PC-3 (cell line): ENCODE measurements at regions of chr13 and their contacts with region 1.

Region 1: DNA sequence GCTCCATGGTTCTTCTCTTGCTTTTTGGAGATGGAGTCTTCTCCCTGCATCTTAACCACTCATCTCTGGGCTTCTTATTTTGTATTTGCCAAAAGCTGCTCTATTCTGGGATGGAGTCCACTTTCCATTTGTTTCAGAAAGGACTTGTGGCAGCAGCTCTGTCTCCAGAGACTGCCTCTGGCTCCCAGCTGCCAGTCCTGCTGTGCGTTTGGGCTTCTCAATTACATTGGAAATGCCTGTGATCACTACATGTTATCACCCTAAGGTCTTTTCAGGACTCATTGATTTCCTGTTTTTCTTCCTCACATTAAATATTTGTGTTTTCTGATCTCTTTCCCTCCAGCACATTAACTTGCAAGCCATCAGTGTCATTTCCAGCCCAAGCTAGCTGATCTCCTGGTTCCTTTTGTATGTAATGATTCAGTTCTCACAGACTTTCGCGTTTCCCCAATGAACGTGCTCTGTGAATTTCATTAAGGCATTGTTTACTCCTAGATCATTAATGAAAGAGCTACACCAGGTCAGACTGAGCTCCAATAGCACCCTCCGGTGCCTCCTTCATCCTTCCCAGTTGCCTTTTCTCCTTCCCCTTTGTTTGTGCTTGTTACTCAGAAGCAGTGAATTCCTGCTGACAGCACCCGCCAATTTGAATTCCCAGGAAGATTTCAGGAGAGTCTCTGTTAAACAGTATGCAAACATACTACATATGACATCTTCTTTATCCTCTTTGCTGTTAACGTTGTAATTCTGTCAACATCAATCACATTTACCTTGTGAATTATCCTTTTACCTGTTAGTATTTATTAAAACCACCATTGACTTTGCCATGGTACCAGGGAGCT is 3.0 kb downstream of the CBY2 start:
- DNase-seq: no peak
- ATAC-seq: no peak
- H3K4me3 ChIP-seq: no peak overlapping the region
- H3K27ac ChIP-seq: no peak overlapping the region
- H3K4me1 ChIP-seq: no peaks in the 10 kb centered on the region
- H3K27me3 ChIP-seq: no peaks in the 10 kb centered on the region
- CTCF ChIP-seq: no peak

Region 2: DNA sequence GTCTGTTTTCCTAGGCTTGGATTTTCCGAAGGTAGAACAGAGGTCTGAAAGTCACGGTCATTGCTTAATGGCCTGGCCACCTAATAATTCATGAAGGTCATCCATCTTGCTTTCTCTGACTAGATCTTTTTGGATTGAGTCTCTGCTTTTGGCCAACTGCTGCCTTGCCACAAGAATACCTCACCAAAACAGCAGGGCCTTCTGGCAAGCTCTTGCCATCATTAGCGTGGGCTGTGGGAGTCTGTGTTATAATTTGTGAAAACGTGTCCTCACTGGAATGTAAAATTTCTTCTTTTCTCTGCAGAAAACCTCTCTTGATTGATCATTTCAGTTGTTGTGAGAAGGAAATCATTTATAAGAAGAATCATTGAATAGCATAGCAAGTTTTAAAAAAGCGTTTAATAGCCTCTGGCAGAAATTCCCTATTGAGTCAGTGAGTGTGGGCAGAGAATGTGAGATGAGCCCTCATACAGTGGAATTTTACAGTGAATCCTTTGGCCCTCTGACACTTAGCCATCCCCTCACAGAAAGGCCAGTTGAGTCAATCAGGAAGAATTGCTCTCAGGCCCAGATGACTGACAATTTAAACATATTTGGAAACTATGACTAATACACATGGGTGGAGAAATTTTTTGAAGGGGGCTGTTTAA is 46.4 kb before region 1 on chr13:
- CTCF ChIA-PET with region 1: no interaction called
- POLR2A ChIA-PET with region 1: no interaction called
- intact Hi-C with region 1: no loop called
- DNase-seq: peak; percentile 69
- ATAC-seq: peak; percentile 58
- H3K4me3 ChIP-seq: no peak overlapping the region
- H3K27ac ChIP-seq: peak overlapping the region; percentile 48
- H3K4me1 ChIP-seq: peaks cover 13% of the 10 kb centered on the region
- H3K27me3 ChIP-seq: no peaks in the 10 kb centered on the region
- CTCF ChIP-seq: no peak

Region 3: GRCh38 chr13:45682494-45683008 is 22.5 kb before region 1 on chr13:
- CTCF ChIA-PET with region 1: no interaction called
- POLR2A ChIA-PET with region 1: interaction called, 11 read pairs
- intact Hi-C with region 1: no loop called
- DNase-seq: no peak
- ATAC-seq: no peak
- H3K4me3 ChIP-seq: no peak overlapping the region
- H3K27ac ChIP-seq: no peak overlapping the region
- H3K4me1 ChIP-seq: peaks cover 6% of the 10 kb centered on the region; the same call in 1 of the 2 replicates
- H3K27me3 ChIP-seq: no peaks in the 10 kb centered on the region
- CTCF ChIP-seq: no peak